IMR-90 (cell line): ENCODE measurements at regions of chr5 and their contacts with region 1.

Region 1: GRCh38 chr5:72503888-72504491 is 3.2 kb downstream of the ZNF366 start:
- DNase-seq: peak; percentile 44
- ATAC-seq: peak; percentile 65
- H3K4me3 ChIP-seq: no peak overlapping the region
- H3K27ac ChIP-seq: peak overlapping the region; percentile 21; the same call in 1 of the 2 replicates
- H3K4me1 ChIP-seq: peaks cover 12% of the 10 kb centered on the region
- H3K27me3 ChIP-seq: no peaks in the 10 kb centered on the region
- CTCF ChIP-seq: no peak
- POLR2A ChIP-seq: no peak
- RAD21 ChIP-seq: no peak

Region 2: DNA sequence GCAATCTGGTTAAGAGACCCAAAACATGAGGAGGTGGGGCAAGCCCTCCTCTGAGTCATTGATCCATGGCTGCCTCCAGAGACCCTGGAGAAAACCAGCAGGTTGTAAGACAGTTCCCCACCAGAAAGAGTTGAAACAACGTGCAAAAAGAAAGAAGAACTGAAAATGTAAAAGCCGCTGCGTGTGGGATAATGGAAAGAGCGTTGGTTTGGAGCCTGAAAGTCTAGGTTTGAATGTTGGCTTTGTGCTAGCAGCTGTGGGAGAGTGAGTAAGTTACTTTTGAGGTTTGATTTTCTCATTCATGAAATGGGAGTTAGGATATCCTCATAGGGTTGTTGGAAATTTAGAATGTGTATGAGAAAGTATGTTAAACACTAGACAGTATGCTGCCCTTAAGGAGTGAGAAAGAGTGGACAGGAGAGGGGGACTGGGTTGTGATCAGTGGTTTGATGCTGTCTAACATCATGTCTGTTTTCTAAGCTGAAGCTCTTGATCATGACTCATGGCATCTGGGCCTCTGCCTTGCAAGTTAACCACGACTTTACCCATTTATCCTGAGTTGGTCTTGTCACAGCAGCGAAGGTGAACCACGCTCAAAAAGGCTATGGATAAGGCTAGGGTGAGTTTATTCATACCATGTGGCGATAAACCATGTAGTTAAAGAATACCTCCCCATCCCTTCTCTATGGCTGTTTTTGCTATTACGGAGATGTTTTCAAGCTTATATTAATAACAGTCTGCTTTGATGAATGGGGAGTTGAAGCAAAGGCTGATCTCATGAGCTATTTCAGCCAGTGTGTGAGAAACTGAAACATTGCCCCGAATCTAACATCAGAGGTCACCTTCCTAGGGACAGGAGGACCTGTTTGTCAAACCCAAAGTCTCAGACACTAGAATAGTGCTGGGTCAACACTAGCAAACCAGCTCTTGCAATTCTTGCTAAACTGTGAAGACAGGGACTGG is 38.1 kb before region 1 on chr5:
- CTCF ChIA-PET with region 1: no interaction called
- POLR2A ChIA-PET with region 1: no interaction called
- dilution Hi-C with region 1: no loop called
- in situ Hi-C with region 1: no loop called
- intact Hi-C with region 1: loop called (anchors 5 kb)
- DNase-seq: peak; percentile 75
- ATAC-seq: peak; percentile 35; the same call in 1 of the 2 replicates
- H3K4me3 ChIP-seq: no peak overlapping the region
- H3K27ac ChIP-seq: no peak overlapping the region
- H3K4me1 ChIP-seq: peaks cover 6% of the 10 kb centered on the region; the same call in 1 of the 2 replicates
- H3K27me3 ChIP-seq: no peaks in the 10 kb centered on the region
- CTCF ChIP-seq: no peak
- POLR2A ChIP-seq: no peak
- RAD21 ChIP-seq: no peak

Region 3: DNA sequence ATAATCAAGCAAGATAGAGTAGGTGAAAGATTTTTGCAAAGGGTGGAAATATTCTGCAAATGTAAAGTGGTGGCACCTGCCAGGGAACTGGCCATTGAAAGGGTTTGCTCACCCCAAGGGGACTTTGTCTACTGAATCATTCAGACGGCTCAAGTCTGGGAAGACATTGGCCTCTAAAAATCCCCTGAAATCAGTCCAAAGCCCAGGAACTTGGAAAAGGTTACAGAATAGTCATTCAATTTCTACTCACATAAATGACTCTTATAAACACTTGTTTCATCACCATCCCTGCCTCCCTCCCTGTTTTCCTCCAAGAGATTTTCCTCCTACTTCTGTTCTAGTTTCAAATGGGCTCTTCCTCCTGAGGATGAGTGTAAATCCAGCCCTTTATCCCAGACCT is 25.3 kb before region 1 on chr5:
- CTCF ChIA-PET with region 1: no interaction called
- POLR2A ChIA-PET with region 1: no interaction called
- dilution Hi-C with region 1: no loop called
- in situ Hi-C with region 1: no loop called
- intact Hi-C with region 1: no loop called
- DNase-seq: peak; percentile 66
- ATAC-seq: peak; percentile 37; the same call in 1 of the 2 replicates
- H3K4me3 ChIP-seq: no peak overlapping the region
- H3K27ac ChIP-seq: no peak overlapping the region
- H3K4me1 ChIP-seq: peaks cover 2% of the 10 kb centered on the region; the same call in 1 of the 2 replicates
- H3K27me3 ChIP-seq: peaks cover 2% of the 10 kb centered on the region; the same call in 1 of the 2 replicates
- CTCF ChIP-seq: no peak
- POLR2A ChIP-seq: no peak
- RAD21 ChIP-seq: no peak

Region 4: GRCh38 chr5:72523960-72524582 is 20.1 kb after region 1 on chr5:
- CTCF ChIA-PET with region 1: no interaction called
- POLR2A ChIA-PET with region 1: no interaction called
- dilution Hi-C with region 1: no loop called
- in situ Hi-C with region 1: no loop called
- intact Hi-C with region 1: no loop called
- DNase-seq: peak; percentile 88
- ATAC-seq: peak; percentile 84
- H3K4me3 ChIP-seq: no peak overlapping the region
- H3K27ac ChIP-seq: no peak overlapping the region
- H3K4me1 ChIP-seq: peaks cover 2% of the 10 kb centered on the region; the same call in 1 of the 2 replicates
- H3K27me3 ChIP-seq: no peaks in the 10 kb centered on the region
- CTCF ChIP-seq: peak; percentile 73
- POLR2A ChIP-seq: no peak
- RAD21 ChIP-seq: peak; percentile 86